Activated T-helper 1 cell treated with anti-CD3 and anti-CD28 coated beads, Interleukin-12 subunit alpha, Interleukin-12 subunit beta, Interleukin-2, Interleukin-4 antibody, amounts not matched to agents 30 ng/mL and 10 ng/mL and 1 ng/mL, durations not matched to agents 14 hours and 24 hours and 36 hours (primary cell): ENCODE measurements at regions of chr2 and their contacts with region 1.

Region 1: DNA sequence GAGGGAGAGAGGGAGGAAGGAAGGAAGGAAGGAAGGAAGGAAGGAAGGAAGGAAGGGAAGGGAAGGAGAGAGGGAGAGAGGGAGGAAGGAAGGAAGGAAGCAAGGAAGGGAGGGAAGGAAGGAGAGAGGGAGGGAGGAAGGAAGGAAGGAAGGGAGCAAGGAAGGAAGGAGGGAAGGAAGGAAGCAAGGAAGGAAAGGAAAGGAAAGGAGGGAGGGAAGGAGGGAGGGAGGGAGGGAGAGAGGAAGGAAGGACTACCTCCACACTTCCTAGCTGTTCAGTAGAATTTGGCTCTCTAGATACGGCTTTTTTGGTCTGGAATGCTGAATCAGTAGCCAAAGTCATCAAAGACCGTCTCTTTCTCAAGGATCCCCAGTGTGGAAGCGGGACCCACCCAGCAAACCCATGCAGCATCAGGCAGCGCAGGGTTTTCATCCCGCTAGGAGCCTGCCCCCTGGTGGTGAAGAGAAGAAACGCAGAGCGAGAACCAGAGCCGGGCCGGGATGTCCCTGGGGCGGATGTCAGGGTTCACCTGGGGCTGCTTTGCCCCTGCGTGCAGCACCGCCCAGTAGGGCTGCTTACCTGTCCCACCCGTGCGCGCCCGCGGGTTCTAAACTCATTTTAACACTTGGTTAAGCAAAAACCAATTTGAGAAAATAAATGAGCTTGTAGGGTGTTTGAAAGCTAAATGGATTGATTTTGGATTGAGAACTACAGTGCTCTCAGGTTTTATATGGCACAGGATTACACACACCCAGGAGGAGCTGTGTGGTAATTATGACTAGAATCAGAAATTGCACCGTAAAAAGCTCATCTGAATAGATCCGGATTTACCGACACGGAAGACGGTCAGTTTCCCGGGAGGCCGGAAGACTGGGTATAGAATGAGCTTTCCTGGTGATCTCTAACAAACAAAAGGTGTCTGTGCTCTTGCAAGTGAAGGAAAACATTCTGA is 48.1 kb upstream of the ARL4C start:
- DNase-seq: peak; percentile 70
- H3K4me3 Mint-ChIP-seq: no peak overlapping the region
- H3K27ac Mint-ChIP-seq: no peak overlapping the region
- H3K4me1 Mint-ChIP-seq: peaks cover 5% of the 10 kb centered on the region
- H3K27me3 Mint-ChIP-seq: peaks cover 15% of the 10 kb centered on the region

Region 2: GRCh38 chr2:234142530-234142929 is 402.4 kb before region 1 on chr2:
- intact Hi-C with region 1: no loop called
- DNase-seq: no peak
- H3K4me3 Mint-ChIP-seq: no peak overlapping the region
- H3K27ac Mint-ChIP-seq: no peak overlapping the region
- H3K4me1 Mint-ChIP-seq: peaks cover 33% of the 10 kb centered on the region
- H3K27me3 Mint-ChIP-seq: peaks cover 5% of the 10 kb centered on the region

Region 3: DNA sequence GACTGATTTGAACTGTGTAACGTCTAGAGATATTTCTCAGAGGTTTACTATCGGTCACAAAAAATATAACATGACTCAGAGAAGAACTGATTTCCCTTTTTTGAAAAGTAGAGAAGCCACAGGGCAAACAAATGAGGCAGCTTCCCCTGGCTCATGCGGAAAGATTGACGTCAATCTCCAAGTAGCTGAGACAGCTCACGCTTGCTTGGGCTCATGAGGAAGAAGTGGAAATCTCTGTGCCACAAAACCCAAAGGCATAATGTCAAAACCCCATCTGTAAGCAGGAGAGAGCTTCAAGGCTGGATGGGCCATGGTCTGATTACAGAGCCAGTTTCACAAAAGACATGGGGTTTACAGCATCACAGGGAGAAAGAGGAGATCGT is 236.1 kb before region 1 on chr2:
- intact Hi-C with region 1: no loop called
- DNase-seq: peak; percentile 79
- H3K4me3 Mint-ChIP-seq: peak overlapping the region; percentile 68
- H3K27ac Mint-ChIP-seq: peak overlapping the region; percentile 99
- H3K4me1 Mint-ChIP-seq: peaks cover 70% of the 10 kb centered on the region
- H3K27me3 Mint-ChIP-seq: no peaks in the 10 kb centered on the region

Region 4: DNA sequence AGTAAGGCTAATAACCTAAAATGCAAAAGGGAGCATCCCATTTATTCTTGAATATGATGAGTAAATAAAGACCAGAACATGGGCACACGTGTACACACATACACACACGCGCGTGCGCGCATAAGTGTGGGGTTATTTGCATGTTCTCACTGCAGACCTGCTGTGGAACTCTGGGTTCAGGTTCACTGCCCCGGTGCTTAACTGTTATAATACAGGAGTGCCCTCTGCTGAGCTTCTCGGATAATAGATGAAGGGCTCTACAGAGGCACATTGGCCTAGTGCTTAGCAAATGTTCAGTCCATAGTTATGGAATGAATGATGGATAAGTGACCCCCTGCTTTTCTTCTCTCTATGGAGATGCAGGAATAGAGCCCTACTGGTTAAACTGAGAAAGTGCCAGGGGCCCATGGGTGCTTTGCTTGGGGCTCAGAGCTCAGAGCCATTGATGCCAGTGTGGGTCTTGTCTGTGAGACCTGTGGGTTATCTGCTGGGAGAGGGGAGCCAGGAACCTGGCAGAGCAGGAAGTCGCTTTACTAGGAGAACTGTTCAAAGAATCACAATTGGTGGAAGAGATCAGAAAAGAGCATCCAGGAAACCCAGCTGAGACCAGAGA is 44.4 kb before region 1 on chr2:
- intact Hi-C with region 1: loop called (anchors 1 kb)
- DNase-seq: peak; percentile 72
- H3K4me3 Mint-ChIP-seq: peak overlapping the region; percentile 58
- H3K27ac Mint-ChIP-seq: peak overlapping the region; percentile 34
- H3K4me1 Mint-ChIP-seq: peaks cover 32% of the 10 kb centered on the region
- H3K27me3 Mint-ChIP-seq: peaks cover 13% of the 10 kb centered on the region

Region 5: GRCh38 chr2:234512884-234513669 is 31.9 kb before region 1 on chr2:
- intact Hi-C with region 1: no loop called
- DNase-seq: no peak
- H3K4me3 Mint-ChIP-seq: no peak overlapping the region
- H3K27ac Mint-ChIP-seq: no peak overlapping the region
- H3K4me1 Mint-ChIP-seq: no peaks in the 10 kb centered on the region
- H3K27me3 Mint-ChIP-seq: peaks cover 17% of the 10 kb centered on the region

Region 6: DNA sequence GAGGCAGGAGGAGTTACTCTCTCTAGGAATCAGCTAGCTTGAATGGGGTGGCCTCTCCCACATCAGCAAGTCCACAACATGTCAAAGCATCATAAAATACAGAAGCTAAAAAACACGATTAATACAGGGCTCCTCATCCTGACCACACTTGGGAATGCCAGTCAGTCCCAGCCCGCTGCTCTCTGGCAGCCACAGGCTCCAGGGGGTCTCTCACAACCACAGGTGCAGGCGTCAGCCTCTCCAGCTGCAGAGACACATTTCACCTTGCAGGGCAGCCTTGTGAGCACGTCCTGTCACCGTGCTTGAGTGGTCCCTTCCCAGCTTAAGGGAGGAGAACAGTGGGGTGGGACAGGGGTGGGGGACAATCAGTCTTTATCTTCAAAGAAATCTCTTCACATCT is 269.4 kb after region 1 on chr2:
- intact Hi-C with region 1: no loop called
- DNase-seq: no peak
- H3K4me3 Mint-ChIP-seq: no peak overlapping the region
- H3K27ac Mint-ChIP-seq: no peak overlapping the region
- H3K4me1 Mint-ChIP-seq: no peaks in the 10 kb centered on the region
- H3K27me3 Mint-ChIP-seq: peaks cover 1% of the 10 kb centered on the region